ENCODE measurements at regions of chr10 and their contacts with region 1.

Region 1: GRCh38 chr10:101018600-101019439 is 12.1 kb downstream of the PDZD7 start:
- H3K4me3 ChIP-seq: no peak overlapping the region
- H3K27ac ChIP-seq: no peak overlapping the region
- H3K4me1 ChIP-seq: no peaks in the 10 kb centered on the region; the same call in 1 of the 2 replicates
- CTCF ChIP-seq: peak; percentile 95

Region 2: GRCh38 chr10:100872034-100872791 is 146.6 kb before region 1 on chr10:
- CTCF ChIA-PET with region 1: no interaction called
- POLR2A ChIA-PET with region 1: no interaction called
- H3K4me3 ChIP-seq: no peak overlapping the region
- H3K27ac ChIP-seq: no peak overlapping the region
- H3K4me1 ChIP-seq: no peaks in the 10 kb centered on the region
- CTCF ChIP-seq: peak; percentile 85

Region 3: GRCh38 chr10:100998991-100999741 is 19.7 kb before region 1 on chr10:
- CTCF ChIA-PET with region 1: interaction called, 274 read pairs
- POLR2A ChIA-PET with region 1: interaction called, 14 read pairs
- H3K4me3 ChIP-seq: peak overlapping the region; percentile 57
- H3K27ac ChIP-seq: peak overlapping the region; percentile 94
- H3K4me1 ChIP-seq: peaks cover 8% of the 10 kb centered on the region
- CTCF ChIP-seq: peak; percentile 93

Region 4: DNA sequence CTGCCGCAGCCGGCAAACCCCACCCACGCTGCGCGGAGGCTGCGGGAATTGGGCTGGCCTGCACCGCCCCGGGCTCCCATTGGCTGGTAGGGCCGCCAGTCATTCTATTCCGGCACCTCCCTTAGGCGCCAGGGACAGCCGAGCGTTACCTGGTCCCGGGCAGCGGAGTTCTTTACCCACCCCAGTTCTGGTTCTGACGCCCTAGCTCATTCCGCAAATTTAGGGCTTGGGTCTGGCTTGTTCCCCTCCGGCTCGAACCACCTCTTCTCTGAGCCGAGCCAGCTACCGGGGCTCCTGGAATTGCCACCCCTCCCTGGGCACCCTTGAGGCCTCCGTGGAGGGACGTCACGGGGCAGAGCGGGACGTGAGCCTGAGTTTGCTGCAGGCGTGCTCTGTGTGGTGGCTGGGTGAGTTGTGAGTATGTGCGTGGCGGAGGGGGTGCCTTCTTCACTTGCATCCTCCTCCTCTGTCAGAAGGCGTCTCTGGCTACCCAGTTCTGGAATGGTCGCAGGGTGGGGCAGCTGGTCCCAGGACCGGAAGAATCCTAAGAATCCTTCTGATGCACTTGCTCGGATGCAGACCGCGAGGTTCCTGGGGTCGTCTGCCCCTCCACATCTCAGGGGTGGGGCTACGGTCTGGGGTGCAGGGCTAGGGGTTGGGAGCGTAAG is 12.4 kb after region 1 on chr10 and contains the starts of genes PDZD7 and SFXN3:
- CTCF ChIA-PET with region 1: interaction called, 129 read pairs
- POLR2A ChIA-PET with region 1: interaction called, 9 read pairs
- H3K4me3 ChIP-seq: peak within 1 kb of the TSS; percentile 45
- H3K27ac ChIP-seq: peak within 1 kb of the TSS; percentile 64
- H3K4me1 ChIP-seq: peaks cover 20% of the 10 kb centered on the region
- CTCF ChIP-seq: no peak

Region 5: DNA sequence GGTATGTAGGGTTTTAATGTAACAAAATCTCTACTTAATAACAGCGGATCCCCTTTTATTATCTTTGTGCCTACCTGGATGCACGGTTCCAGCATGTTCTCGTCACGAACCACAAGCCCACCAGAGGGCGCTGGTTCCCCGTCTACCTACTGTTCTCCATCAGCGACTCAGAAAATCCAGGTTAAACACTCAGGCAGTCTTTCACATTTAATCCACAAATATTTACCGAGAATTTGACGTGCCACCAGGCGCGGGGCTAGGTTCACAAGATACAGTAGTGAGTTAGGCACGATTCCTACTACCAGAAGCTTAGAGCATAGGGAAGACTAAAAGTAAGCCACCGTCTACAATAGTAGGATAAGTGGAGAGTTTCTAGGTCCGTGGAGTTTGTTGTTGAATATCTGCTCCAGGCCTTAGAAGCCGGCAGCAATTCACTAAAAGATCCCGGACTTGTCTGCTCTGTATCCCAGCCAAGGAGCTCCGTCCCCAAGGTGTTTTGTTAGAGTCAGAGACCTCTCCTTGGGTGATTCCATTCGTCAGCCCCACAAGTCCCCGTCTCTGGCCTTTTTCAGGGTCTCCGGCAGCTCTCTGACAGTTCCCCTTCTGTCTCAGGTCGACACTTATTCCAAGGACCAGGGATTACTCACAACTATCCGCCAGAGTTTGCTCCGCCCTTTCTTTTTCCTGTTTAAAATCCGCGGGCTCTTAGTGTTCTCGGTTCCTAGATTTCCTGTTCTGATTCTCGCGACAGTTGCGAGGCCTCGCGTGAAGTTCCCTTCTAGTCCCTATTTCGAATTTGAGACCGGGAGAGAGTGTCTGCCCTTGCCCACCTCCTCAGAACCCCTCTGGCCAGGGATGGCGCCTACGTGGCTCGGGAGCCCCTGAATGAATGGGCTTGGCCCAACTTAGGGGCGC is 41.5 kb after region 1 on chr10:
- CTCF ChIA-PET with region 1: interaction called, 57 read pairs
- POLR2A ChIA-PET with region 1: no interaction called
- H3K4me3 ChIP-seq: peak overlapping the region; percentile 91
- H3K27ac ChIP-seq: peak overlapping the region; percentile 97
- H3K4me1 ChIP-seq: peaks cover 18% of the 10 kb centered on the region
- CTCF ChIP-seq: peak; percentile 75

Region 6: GRCh38 chr10:101067356-101068083 is 48.7 kb after region 1 on chr10:
- CTCF ChIA-PET with region 1: interaction called, 38 read pairs
- POLR2A ChIA-PET with region 1: interaction called, 6 read pairs
- H3K4me3 ChIP-seq: peak overlapping the region; percentile 49
- H3K27ac ChIP-seq: peak overlapping the region; percentile 66
- H3K4me1 ChIP-seq: peaks cover 15% of the 10 kb centered on the region
- CTCF ChIP-seq: peak; percentile 91

Measured in HEK293 (cell line).